CD4-positive, alpha-beta memory T cell (primary cell): ENCODE measurements at regions of chr21 and their contacts with region 1.

Region 1: DNA sequence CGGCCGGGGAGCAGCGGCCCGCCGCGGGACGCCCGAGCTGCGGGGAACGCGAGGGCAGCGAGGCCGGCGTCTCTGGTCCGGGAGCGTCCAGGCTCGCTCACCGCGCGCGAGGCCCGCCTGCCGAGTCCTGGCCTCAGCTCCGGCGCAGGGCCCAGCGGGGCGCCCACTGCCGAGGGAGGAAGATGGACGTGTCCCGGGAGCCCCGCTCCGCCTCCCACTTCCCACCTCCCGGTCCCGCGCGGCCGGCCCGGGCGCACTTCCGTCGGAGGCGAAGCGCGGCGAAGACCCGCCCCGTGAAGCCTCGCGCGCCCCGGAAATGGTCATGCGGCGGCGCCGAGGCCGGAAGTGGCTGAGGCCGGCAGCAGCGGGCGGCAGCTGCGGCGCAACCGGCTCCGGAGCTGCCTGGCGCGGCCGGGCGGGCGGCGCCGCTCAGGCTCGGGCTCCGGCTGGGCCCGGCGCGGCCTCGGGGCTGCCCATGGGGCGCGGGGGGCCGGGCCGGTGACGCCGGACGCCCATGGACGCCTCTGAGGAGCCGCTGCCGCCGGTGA is at the start of gene TRAPPC10:
- DNase-seq: peak; percentile 71 to 82 (median 78)
- H3K4me3 ChIP-seq: peak within 1 kb of the TSS; percentile 44 to 82
- H3K4me3 Mint-ChIP-seq: peak within 1 kb of the TSS; percentile 89 to 97 (median 94)
- H3K27ac ChIP-seq: peak within 1 kb of the TSS; percentile 77
- H3K27ac Mint-ChIP-seq: peak within 1 kb of the TSS; percentile 91 to 98 (median 95)
- H3K4me1 ChIP-seq: peaks cover 46% of the 10 kb centered on the region
- H3K4me1 Mint-ChIP-seq: peaks cover 36 to 56% (median 47%) of the 10 kb centered on the region in 4 donors
- H3K27me3 ChIP-seq: no peaks in the 10 kb centered on the region
- H3K27me3 Mint-ChIP-seq: no peaks in the 10 kb centered on the region
- total RNA-seq, gene TRAPPC10: 94.2 to 95.5 TPM

Region 2: DNA sequence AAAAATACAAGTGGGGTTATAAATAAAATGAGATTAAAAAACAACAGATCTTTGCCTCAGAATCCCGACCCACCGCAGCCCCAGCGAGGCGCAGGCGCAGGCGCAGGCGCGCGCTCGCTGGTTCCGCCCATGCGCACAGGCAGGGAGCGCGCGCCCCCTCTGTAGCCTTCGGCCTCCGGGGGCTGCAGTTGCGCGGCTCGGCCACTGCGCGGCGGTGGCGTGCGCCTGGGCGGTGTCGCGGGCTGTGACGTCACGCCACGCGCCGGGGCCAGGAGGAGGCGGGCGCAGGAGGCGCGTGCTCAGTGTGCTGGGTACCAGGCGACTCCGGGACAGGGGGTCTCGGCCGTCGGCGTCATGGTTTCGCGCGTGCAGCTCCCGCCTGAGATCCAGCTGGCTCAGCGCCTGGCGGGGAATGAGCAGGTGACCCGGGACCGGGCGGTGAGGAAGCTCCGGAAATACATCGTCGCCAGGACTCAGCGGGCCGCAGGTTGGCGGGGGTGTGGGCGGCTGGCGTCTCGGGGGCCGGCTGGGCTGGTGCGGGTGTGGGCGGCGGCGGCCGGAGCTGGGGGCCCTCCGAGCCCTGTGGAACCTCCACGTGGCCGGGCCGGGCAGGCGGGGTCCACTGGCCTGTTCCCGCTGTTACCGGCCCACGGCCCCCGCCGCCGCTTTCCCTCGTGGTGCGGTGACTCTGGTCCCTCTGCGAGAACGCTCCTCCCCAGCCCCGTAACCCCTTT is 222.6 kb before region 1 on chr21 and contains the start of gene RRP1:
- CTCF ChIA-PET with region 1: no interaction called
- POLR2A ChIA-PET with region 1: no interaction called
- intact Hi-C with region 1: loop called (anchors 1 kb)
- DNase-seq: peak; percentile 85 to 99 (median 95)
- H3K4me3 ChIP-seq: peak within 1 kb of the TSS; percentile 80 to 90
- H3K4me3 Mint-ChIP-seq: peak within 1 kb of the TSS; percentile 90 to 95 (median 91)
- H3K27ac ChIP-seq: peak within 1 kb of the TSS; percentile 72
- H3K27ac Mint-ChIP-seq: peak within 1 kb of the TSS; percentile 89 to 96 (median 91)
- H3K4me1 ChIP-seq: peaks cover 21% of the 10 kb centered on the region
- H3K4me1 Mint-ChIP-seq: peaks cover 11 to 28% (median 21%) of the 10 kb centered on the region in 4 donors
- H3K27me3 ChIP-seq: no peaks in the 10 kb centered on the region
- H3K27me3 Mint-ChIP-seq: no peaks in the 10 kb centered on the region
- total RNA-seq, gene RRP1: 25.4 to 27.7 TPM

Region 3: GRCh38 chr21:43916691-43917514 is 95.2 kb before region 1 on chr21:
- CTCF ChIA-PET with region 1: no interaction called
- POLR2A ChIA-PET with region 1: no interaction called
- intact Hi-C with region 1: no loop called
- DNase-seq: peak; percentile 68 to 85 (median 75)
- H3K4me3 ChIP-seq: peak overlapping the region; percentile 5 to 51
- H3K4me3 Mint-ChIP-seq: peak overlapping the region; percentile 85 to 96 (median 90)
- H3K27ac ChIP-seq: peak overlapping the region; percentile 62
- H3K27ac Mint-ChIP-seq: peak overlapping the region; percentile 83 to 99 (median 95)
- H3K4me1 ChIP-seq: peaks cover 53% of the 10 kb centered on the region
- H3K4me1 Mint-ChIP-seq: peaks cover 43 to 74% (median 61%) of the 10 kb centered on the region in 4 donors
- H3K27me3 ChIP-seq: no peaks in the 10 kb centered on the region
- H3K27me3 Mint-ChIP-seq: no peaks in the 10 kb centered on the region

Region 4: DNA sequence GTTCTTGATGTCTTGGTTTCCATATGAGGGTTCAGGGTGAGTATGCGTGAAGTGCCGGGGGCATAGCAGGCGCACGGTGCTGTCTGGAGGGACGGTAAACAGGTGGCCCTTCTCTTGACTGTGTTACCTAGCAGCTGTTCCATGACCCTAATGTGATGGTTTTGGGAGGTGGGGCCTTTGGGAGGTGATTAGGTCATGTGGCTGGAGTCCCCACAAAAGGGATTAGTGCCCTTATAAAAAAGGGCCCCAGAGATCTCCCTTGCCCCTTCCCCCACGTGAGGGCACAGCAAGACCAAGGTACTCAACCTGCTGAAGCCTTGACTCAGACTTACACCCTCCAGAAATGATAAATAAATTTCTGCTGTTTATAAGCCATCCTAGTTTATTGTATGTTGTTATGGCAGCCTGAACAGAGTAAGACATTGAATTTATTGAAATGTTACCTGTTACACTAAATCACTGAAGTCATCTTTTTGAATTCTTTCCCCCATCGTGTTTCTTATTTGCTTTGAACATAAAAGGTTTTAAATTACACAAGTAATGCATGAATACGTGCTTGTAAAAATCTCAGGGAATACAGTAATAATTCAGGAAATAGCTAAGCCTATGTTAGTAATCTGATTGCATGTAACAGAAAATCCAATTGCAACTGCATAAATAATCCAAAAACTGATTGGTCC is 15.7 kb after region 1 on chr21:
- CTCF ChIA-PET with region 1: interaction called, 4 read pairs
- POLR2A ChIA-PET with region 1: interaction called, 7 read pairs
- intact Hi-C with region 1: loop called (anchors 2 kb)
- DNase-seq: no peak
- H3K4me3 ChIP-seq: no peak overlapping the region
- H3K4me3 Mint-ChIP-seq: peak overlapping the region in 1 of 8 donors; percentile 13
- H3K27ac ChIP-seq: no peak overlapping the region
- H3K27ac Mint-ChIP-seq: no peak overlapping the region
- H3K4me1 ChIP-seq: peaks cover 83% of the 10 kb centered on the region
- H3K4me1 Mint-ChIP-seq: peaks cover 45 to 79% (median 63%) of the 10 kb centered on the region in 4 donors
- H3K27me3 ChIP-seq: no peaks in the 10 kb centered on the region
- H3K27me3 Mint-ChIP-seq: no peaks in the 10 kb centered on the region

Region 5: DNA sequence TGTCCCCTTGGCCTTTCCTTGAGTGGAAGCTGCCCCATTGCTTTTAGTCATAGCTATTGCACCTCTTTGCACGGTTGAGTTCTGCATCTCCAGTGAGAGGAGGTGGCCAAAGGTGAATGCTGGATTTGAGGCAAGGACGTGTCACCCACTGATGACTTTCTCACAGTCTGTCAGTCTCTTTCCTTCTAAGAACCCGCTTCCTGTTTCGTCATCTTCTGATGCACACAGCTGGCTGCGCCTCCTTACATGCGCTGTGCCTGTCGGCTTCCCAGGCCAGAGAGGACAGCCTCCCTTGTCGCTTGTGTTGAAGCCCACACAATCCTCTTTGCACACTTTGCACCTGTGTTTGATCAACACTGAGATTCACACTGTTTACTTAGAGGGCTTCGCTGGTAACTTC is 53.4 kb after region 1 on chr21:
- CTCF ChIA-PET with region 1: no interaction called
- POLR2A ChIA-PET with region 1: interaction called, 3 read pairs
- intact Hi-C with region 1: loop called (anchors 5 kb)
- DNase-seq: peak; percentile 81 to 93 (median 88)
- H3K4me3 ChIP-seq: peak overlapping the region in 1 of 2 donors; percentile 20
- H3K4me3 Mint-ChIP-seq: peak overlapping the region in 7 of 8 donors; percentile 69 to 87 (median 82)
- H3K27ac ChIP-seq: peak overlapping the region; percentile 70
- H3K27ac Mint-ChIP-seq: peak overlapping the region; percentile 90 to 100 (median 99)
- H3K4me1 ChIP-seq: peaks cover 19% of the 10 kb centered on the region
- H3K4me1 Mint-ChIP-seq: peaks cover 29 to 49% (median 40%) of the 10 kb centered on the region in 4 donors
- H3K27me3 ChIP-seq: no peaks in the 10 kb centered on the region
- H3K27me3 Mint-ChIP-seq: no peaks in the 10 kb centered on the region

Region 6: GRCh38 chr21:44074311-44074958 is 62.4 kb after region 1 on chr21:
- CTCF ChIA-PET with region 1: interaction called, 6 read pairs
- POLR2A ChIA-PET with region 1: no interaction called
- intact Hi-C with region 1: loop called (anchors 1 kb)
- DNase-seq: no peak
- H3K4me3 ChIP-seq: no peak overlapping the region
- H3K4me3 Mint-ChIP-seq: peak overlapping the region in 1 of 8 donors; percentile 17
- H3K27ac ChIP-seq: no peak overlapping the region
- H3K27ac Mint-ChIP-seq: peak overlapping the region in 6 of 7 donors; percentile 19 to 83 (median 70)
- H3K4me1 ChIP-seq: peaks cover 16% of the 10 kb centered on the region
- H3K4me1 Mint-ChIP-seq: peaks cover 26 to 35% (median 31%) of the 10 kb centered on the region in 4 donors
- H3K27me3 ChIP-seq: no peaks in the 10 kb centered on the region
- H3K27me3 Mint-ChIP-seq: no peaks in the 10 kb centered on the region

Region 7: GRCh38 chr21:44083631-44084291 is 71.7 kb after region 1 on chr21:
- CTCF ChIA-PET with region 1: interaction called, 6 read pairs
- POLR2A ChIA-PET with region 1: interaction called, 63 read pairs
- intact Hi-C with region 1: loop called (anchors 1 kb)
- DNase-seq: peak; percentile 79 to 86 (median 83)
- H3K4me3 ChIP-seq: peak overlapping the region; percentile 1 to 30
- H3K4me3 Mint-ChIP-seq: peak overlapping the region; percentile 74 to 82 (median 81)
- H3K27ac ChIP-seq: peak overlapping the region; percentile 71
- H3K27ac Mint-ChIP-seq: peak overlapping the region; percentile 89 to 98 (median 95)
- H3K4me1 ChIP-seq: peaks cover 97% of the 10 kb centered on the region
- H3K4me1 Mint-ChIP-seq: peaks cover 62 to 97% (median 84%) of the 10 kb centered on the region in 4 donors
- H3K27me3 ChIP-seq: no peaks in the 10 kb centered on the region
- H3K27me3 Mint-ChIP-seq: no peaks in the 10 kb centered on the region

Region 8: DNA sequence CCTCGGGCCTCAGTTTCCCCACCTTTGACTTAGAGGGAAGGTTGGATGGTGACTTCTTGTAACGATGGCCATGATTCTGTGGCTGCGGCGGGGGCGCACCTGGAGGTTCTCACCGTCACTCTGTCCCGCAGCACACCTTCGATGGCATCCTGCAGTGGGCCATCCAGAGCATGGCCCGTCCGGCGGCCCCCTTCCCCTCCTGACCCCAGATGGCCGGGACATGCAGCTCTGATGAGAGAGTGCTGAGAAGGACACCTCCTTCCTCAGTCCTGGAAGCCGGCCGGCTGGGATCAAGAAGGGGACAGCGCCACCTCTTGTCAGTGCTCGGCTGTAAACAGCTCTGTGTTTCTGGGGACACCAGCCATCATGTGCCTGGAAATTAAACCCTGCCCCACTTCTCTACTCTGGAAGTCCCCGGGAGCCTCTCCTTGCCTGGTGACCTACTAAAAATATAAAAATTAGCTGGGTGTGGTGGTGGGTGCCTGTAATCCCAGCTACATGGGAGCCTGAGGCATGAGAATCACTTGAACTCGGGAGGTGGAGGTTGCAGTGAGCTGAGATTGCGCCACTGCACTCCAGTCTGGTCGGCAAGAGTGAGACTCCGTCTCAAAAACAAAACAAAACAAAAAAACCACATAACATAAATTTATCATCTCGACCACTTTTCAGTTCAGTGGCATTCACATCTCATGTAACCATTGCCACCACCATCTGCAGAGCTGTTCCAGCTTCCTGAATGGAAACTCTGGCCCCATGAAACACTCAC is 285.7 kb after region 1 on chr21:
- CTCF ChIA-PET with region 1: no interaction called
- POLR2A ChIA-PET with region 1: no interaction called
- intact Hi-C with region 1: loop called (anchors 2 kb)
- DNase-seq: peak; percentile 72 to 84 (median 74)
- H3K4me3 ChIP-seq: no peak overlapping the region
- H3K4me3 Mint-ChIP-seq: peak overlapping the region; percentile 36 to 94 (median 68)
- H3K27ac ChIP-seq: peak overlapping the region; percentile 36
- H3K27ac Mint-ChIP-seq: peak overlapping the region; percentile 83 to 94 (median 89)
- H3K4me1 ChIP-seq: peaks cover 71% of the 10 kb centered on the region
- H3K4me1 Mint-ChIP-seq: peaks cover 21 to 52% (median 42%) of the 10 kb centered on the region in 4 donors
- H3K27me3 ChIP-seq: no peaks in the 10 kb centered on the region
- H3K27me3 Mint-ChIP-seq: no peaks in the 10 kb centered on the region

Region 9: GRCh38 chr21:44461464-44462001 is 449.5 kb after region 1 on chr21:
- CTCF ChIA-PET with region 1: no interaction called
- POLR2A ChIA-PET with region 1: no interaction called
- intact Hi-C with region 1: no loop called
- DNase-seq: no peak
- H3K4me3 ChIP-seq: no peak overlapping the region
- H3K4me3 Mint-ChIP-seq: no peak overlapping the region
- H3K27ac ChIP-seq: no peak overlapping the region
- H3K27ac Mint-ChIP-seq: no peak overlapping the region
- H3K4me1 ChIP-seq: peaks cover under 1% of the 10 kb centered on the region
- H3K4me1 Mint-ChIP-seq: peaks cover 0 to 4% (median 1%) of the 10 kb centered on the region in 4 donors
- H3K27me3 ChIP-seq: no peaks in the 10 kb centered on the region
- H3K27me3 Mint-ChIP-seq: no peaks in the 10 kb centered on the region